ENCODE measurements at regions of chr15 and their contacts with region 1.

Region 1: DNA sequence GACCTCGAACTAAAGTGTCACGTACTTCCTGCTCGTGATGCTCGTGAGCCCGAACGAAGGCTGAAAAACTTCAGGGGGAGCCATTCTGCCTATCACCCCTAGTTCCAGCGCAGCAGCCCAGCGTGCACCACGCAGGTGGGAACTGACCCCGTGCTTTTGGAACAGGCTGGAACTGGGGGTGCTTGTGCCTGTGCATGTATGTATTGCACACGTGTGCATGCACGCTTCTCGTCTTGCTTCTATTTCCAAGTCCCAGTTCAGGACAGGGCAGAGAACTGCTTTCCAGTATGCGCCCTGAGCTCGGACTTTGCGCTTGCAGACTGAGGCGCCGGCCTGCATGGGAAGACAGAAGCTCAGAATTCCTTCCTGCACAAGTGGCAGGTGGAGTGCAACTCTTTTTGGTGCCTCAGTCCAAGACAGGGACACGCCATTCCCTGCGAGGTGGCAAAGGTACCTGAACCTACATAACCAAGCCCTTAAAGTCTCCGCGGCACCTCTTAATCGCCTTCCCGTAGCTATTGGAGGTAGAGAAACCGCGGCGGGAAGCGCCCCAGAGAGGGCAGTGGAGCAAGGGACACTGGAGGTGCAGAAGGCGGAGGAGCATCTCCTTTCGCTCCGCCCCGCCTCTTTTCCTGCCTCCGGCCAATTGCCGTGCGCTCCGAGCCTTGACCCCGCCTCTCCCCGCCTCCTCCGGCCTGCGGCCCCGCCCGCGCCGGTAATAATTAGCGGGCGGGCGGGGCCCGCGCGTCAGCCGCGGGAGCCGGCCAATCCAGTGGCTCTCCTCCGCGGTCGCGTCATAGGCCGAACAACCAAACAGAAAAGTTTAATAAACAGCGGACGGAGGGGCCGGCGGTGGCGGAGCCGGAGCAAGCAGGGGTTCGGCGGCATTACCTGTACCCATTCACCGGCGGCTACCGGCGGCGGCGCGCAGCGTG is at the start of gene ZFAND6:
- DNase-seq: peak; percentile 99
- H3K4me3 Mint-ChIP-seq: peak within 1 kb of the TSS; percentile 96
- H3K27ac Mint-ChIP-seq: peak within 1 kb of the TSS; percentile 95
- H3K4me1 Mint-ChIP-seq: peaks cover 32% of the 10 kb centered on the region
- H3K27me3 Mint-ChIP-seq: no peaks in the 10 kb centered on the region
- total RNA-seq, gene ZFAND6: 40.4 and 43.5 TPM in 2 replicates

Region 2: GRCh38 chr15:78684657-78685056 is 1374.5 kb before region 1 on chr15:
- intact Hi-C with region 1: no loop called
- DNase-seq: no peak
- H3K4me3 Mint-ChIP-seq: no peak overlapping the region
- H3K27ac Mint-ChIP-seq: no peak overlapping the region
- H3K4me1 Mint-ChIP-seq: no peaks in the 10 kb centered on the region
- H3K27me3 Mint-ChIP-seq: peaks cover 12% of the 10 kb centered on the region

Region 3: GRCh38 chr15:79923515-79924395 is 135.4 kb before region 1 on chr15:
- intact Hi-C with region 1: loop called (anchors 1 kb)
- DNase-seq: peak; percentile 100
- H3K4me3 Mint-ChIP-seq: peak overlapping the region; percentile 98
- H3K27ac Mint-ChIP-seq: peak overlapping the region; percentile 98
- H3K4me1 Mint-ChIP-seq: peaks cover 15% of the 10 kb centered on the region
- H3K27me3 Mint-ChIP-seq: no peaks in the 10 kb centered on the region

Region 4: GRCh38 chr15:80010131-80010673 is 48.9 kb before region 1 on chr15:
- intact Hi-C with region 1: loop called (anchors 2 kb)
- DNase-seq: no peak
- H3K4me3 Mint-ChIP-seq: no peak overlapping the region
- H3K27ac Mint-ChIP-seq: no peak overlapping the region
- H3K4me1 Mint-ChIP-seq: peaks cover 3% of the 10 kb centered on the region
- H3K27me3 Mint-ChIP-seq: no peaks in the 10 kb centered on the region

Region 5: GRCh38 chr15:80072285-80072994 is 13.3 kb after region 1 on chr15:
- intact Hi-C with region 1: loop called (anchors 1 kb)
- DNase-seq: peak; percentile 81
- H3K4me3 Mint-ChIP-seq: peak overlapping the region; percentile 90
- H3K27ac Mint-ChIP-seq: peak overlapping the region; percentile 1
- H3K4me1 Mint-ChIP-seq: peaks cover 34% of the 10 kb centered on the region
- H3K27me3 Mint-ChIP-seq: no peaks in the 10 kb centered on the region

Region 6: DNA sequence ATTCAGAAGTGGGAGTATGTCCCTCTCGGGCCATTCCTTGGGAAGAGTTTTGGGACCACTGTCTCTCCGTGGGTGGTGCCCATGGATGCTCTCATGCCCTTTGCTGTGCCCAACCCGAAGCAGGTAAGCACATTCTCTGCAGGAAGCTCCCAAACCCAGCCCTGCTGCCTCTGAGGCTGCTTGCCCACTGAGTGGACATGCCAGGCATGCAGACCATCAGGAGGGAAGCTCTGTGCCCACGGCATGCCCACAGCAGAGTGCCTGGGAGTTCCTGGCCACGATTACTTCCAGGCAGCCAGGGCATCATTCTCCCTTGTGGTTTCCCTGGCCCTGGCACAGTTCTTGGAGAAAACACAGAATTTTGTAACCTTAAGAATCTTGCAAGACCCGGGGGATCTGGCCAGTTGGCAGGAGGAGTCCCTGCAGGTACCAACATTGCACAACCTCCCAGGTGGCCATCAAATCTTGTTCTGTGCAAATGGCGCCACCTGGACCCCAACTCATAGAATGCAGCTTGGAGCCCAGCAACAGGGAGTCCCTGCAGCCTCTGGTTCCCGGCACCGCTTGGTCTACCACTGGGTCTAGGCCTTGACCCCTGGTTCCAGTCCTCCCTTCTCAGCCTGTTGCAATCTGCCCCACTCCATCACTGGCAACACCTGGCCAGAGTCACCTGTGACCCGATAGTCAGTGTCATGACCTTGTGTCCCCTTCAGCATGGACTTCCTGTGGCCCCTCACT is 114.1 kb after region 1 on chr15:
- intact Hi-C with region 1: loop called (anchors 2 kb)
- DNase-seq: peak; percentile 92
- H3K4me3 Mint-ChIP-seq: no peak overlapping the region
- H3K27ac Mint-ChIP-seq: no peak overlapping the region
- H3K4me1 Mint-ChIP-seq: no peaks in the 10 kb centered on the region
- H3K27me3 Mint-ChIP-seq: no peaks in the 10 kb centered on the region